Heart left ventricle (tissue), 16 donors: ENCODE measurements at regions of chr4 and their contacts with region 1.

Region 1: DNA sequence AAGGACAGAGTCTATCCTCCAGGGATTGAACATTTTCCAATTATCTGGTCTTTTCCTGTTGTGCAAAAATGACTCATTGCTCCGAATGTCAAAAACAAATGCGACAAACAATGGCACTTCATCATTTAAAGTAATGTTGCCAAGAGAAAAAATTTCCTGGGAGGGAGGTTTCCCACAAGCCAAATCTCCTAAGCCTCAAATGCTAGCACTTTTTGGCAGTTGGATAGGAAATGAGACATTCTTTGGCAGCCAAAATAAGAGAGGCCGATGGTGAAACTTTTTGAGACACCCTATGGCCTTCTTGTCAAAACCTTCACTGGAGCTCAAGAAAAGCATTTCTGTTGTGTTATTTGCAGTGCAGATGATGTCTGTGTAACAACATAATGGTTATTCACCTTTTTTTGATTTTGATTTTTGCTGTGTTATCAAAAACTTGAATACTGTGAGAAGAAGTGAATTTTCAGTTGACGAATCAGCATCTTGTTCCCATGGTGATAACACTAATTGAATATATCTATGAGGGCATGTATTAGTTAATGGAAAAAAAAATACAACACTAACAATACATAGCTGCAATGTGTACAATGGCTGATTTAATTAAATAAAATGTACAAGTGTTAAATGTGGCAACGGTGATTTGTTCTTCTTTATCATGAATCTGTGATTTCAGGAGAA is 333.8 kb downstream of the ANK2 start:
- DNase-seq: peak in 1 of 5 donors; percentile 30
- ATAC-seq: peak; percentile 41 to 87 (median 78)
- H3K4me3 ChIP-seq: no peak overlapping the region
- H3K27ac ChIP-seq: peak overlapping the region in 11 of 12 donors; percentile 35 to 76 (median 59)
- H3K4me1 ChIP-seq: peaks cover 2 to 39% (median 27%) of the 10 kb centered on the region in 12 donors
- H3K27me3 ChIP-seq: no peaks in the 10 kb centered on the region
- CTCF ChIP-seq: no peak
- POLR2A ChIP-seq: no peak

Region 2: DNA sequence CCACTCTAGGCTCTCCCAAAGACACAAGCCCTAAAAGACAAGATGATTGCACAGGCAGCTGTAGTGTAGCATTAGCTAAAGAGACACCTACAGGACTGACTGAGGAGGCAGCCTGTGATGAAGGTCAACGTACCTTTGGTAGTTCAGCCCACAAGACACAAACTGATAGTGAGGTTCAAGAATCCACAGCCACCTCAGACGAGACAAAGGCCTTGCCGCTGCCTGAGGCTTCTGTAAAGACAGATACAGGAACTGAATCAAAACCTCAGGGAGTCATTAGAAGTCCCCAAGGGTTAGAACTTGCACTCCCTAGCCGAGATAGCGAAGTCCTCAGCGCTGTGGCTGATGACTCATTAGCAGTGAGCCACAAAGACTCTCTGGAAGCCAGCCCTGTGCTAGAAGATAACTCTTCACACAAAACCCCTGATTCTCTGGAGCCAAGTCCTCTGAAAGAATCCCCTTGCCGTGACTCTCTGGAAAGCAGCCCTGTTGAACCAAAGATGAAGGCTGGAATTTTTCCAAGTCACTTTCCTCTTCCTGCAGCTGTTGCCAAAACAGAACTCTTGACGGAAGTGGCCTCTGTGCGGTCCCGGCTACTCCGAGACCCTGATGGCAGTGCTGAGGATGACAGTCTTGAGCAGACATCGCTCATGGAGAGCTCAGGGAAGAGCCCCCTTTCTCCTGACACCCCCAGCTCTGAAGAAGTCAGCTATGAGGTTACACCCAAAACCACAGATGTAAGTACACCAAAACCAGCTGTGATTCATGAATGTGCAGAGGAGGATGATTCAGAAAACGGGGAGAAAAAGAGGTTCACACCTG is 27.5 kb before region 1 on chr4:
- intact Hi-C with region 1: loop called in 1 of 10 experiments (anchors 2 kb)
- DNase-seq: peak; percentile 26 to 66 (median 49)
- ATAC-seq: peak; percentile 43 to 91 (median 84)
- H3K4me3 ChIP-seq: peak overlapping the region in 7 of 12 donors; percentile 6 to 39 (median 10)
- H3K27ac ChIP-seq: peak overlapping the region in 6 of 12 donors; percentile 10 to 41 (median 23)
- H3K4me1 ChIP-seq: peaks cover 0 to 15% (median 8%) of the 10 kb centered on the region in 12 donors
- H3K27me3 ChIP-seq: no peaks in the 10 kb centered on the region
- CTCF ChIP-seq: peak in 1 of 12 donors; percentile 20
- POLR2A ChIP-seq: no peak

Region 3: DNA sequence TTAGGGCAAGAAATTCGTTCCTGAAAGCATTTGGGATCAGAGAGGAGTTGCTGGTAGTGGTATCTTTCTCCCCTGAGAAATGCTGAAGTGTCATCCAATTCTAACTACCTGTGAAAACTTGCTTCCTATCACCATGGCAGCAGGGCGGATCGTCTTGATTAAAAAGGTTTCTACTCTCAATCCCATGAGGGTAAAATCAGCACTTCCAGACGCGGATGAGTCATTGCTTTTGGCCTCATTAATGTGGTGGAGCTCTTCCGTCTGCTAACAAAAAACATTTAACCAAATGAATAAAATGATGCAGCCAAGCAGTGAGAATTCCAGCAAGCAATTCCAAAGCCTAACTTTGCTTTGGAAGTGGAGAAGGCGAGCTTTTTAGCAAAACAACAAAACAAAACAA is 52.6 kb after region 1 on chr4:
- intact Hi-C with region 1: loop called in 1 of 10 experiments (anchors 2 kb)
- DNase-seq: peak in 4 of 5 donors; percentile 60 to 71 (median 68)
- ATAC-seq: peak; percentile 60 to 87 (median 82)
- H3K4me3 ChIP-seq: peak overlapping the region in 1 of 12 donors; percentile 4
- H3K27ac ChIP-seq: peak overlapping the region; percentile 8 to 89 (median 72)
- H3K4me1 ChIP-seq: peaks cover 0 to 32% (median 15%) of the 10 kb centered on the region in 12 donors
- H3K27me3 ChIP-seq: no peaks in the 10 kb centered on the region
- CTCF ChIP-seq: no peak
- POLR2A ChIP-seq: no peak

Region 4: DNA sequence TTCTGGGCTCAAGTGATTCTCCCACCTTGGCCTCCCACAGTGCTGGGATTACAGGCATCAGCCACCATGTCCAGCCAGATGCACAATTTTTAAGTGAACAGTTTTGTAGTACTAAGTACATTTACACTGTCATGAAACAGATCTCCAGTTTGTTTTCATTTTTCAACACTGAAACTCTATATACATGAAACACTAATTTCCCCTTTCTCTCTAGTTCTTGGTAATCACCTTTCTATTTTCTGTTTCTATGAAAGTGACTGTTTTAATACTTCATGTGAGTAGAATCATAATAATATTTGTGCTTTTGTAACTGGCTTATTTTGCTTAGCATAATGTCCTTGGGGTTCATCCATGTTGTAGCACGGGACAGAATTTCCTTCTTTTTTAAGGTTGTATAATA is 140.8 kb after region 1 on chr4:
- intact Hi-C with region 1: no loop called
- DNase-seq: no peak
- ATAC-seq: no peak
- H3K4me3 ChIP-seq: no peak overlapping the region
- H3K27ac ChIP-seq: no peak overlapping the region
- H3K4me1 ChIP-seq: peaks cover 0 to 10% (median 0%) of the 10 kb centered on the region in 12 donors
- H3K27me3 ChIP-seq: no peaks in the 10 kb centered on the region
- CTCF ChIP-seq: no peak
- POLR2A ChIP-seq: no peak